Caco-2 (cell line): ENCODE measurements at regions of chr1 and their contacts with region 1.

Region 1: DNA sequence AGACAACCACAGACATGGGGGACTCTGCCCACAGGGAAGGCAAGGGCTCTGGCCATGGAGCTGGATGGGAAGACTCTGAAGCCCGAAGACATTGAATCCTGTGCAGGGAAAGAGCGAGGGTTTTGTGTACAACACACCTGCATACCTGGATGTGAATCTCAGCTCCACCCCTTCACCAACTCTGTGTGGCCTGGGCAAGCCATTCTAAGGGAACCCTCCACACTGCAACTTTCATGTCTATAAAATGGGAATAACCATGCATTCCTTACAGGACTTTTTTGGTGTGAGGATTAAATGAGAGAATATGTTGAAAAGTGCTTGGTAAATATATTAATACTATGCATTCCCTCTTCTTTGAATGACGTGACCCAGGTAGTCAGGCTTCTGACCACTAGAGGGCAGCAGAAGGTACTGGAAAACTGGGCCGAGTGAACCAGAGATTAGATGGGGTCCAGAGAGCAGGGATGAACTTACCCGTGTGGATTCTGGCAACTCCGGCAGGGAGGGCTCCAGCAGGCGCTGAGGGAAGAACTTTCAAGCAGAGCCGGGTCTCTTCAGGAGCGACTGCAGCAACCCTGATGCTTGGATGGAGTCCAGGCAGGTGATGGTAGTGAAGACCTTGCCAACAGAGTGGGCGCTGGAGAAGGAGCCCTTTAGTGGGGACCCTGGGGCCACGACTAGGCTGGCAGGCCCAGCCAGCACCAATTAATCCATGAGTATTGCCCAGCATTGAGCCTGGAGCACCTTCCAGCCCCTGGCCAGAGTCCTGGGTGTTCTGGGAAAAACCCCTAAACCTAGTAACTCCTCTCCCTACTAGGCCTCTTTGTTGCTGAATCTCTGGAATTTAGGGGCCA is 834 bp upstream of the ELF3 start:
- DNase-seq: peak; percentile 89 to 91
- H3K4me3 ChIP-seq: peak overlapping the region; percentile 19
- H3K4me3 Mint-ChIP-seq: peak overlapping the region; percentile 72
- H3K27ac Mint-ChIP-seq: peak overlapping the region; percentile 58
- H3K4me1 ChIP-seq: peaks cover 56% of the 10 kb centered on the region
- H3K4me1 Mint-ChIP-seq: peaks cover 30% of the 10 kb centered on the region
- H3K27me3 ChIP-seq: no peaks in the 10 kb centered on the region
- H3K27me3 Mint-ChIP-seq: no peaks in the 10 kb centered on the region
- CTCF ChIP-seq: peak; percentile 88 to 93

Region 2: GRCh38 chr1:201904579-201904978 is 105.0 kb before region 1 on chr1:
- CTCF ChIA-PET with region 1: no interaction called
- POLR2A ChIA-PET with region 1: no interaction called
- intact Hi-C with region 1: no loop called
- DNase-seq: no peak
- H3K4me3 ChIP-seq: no peak overlapping the region
- H3K4me3 Mint-ChIP-seq: no peak overlapping the region
- H3K27ac Mint-ChIP-seq: no peak overlapping the region
- H3K4me1 ChIP-seq: no peaks in the 10 kb centered on the region
- H3K4me1 Mint-ChIP-seq: no peaks in the 10 kb centered on the region
- H3K27me3 ChIP-seq: no peaks in the 10 kb centered on the region; the same call in 1 of the 2 replicates
- H3K27me3 Mint-ChIP-seq: peaks cover 5% of the 10 kb centered on the region
- CTCF ChIP-seq: no peak

Region 3: GRCh38 chr1:202034683-202035462 is 25.3 kb after region 1 on chr1:
- CTCF ChIA-PET with region 1: interaction called, 46 read pairs
- POLR2A ChIA-PET with region 1: interaction called, 109 read pairs
- intact Hi-C with region 1: loop called (anchors 1 kb)
- DNase-seq: peak; percentile 98 to 99
- H3K4me3 ChIP-seq: peak overlapping the region; percentile 26
- H3K4me3 Mint-ChIP-seq: peak overlapping the region; percentile 70
- H3K27ac Mint-ChIP-seq: peak overlapping the region; percentile 95
- H3K4me1 ChIP-seq: peaks cover 59% of the 10 kb centered on the region
- H3K4me1 Mint-ChIP-seq: peaks cover 48% of the 10 kb centered on the region
- H3K27me3 ChIP-seq: no peaks in the 10 kb centered on the region
- H3K27me3 Mint-ChIP-seq: no peaks in the 10 kb centered on the region
- CTCF ChIP-seq: no peak

Region 4: DNA sequence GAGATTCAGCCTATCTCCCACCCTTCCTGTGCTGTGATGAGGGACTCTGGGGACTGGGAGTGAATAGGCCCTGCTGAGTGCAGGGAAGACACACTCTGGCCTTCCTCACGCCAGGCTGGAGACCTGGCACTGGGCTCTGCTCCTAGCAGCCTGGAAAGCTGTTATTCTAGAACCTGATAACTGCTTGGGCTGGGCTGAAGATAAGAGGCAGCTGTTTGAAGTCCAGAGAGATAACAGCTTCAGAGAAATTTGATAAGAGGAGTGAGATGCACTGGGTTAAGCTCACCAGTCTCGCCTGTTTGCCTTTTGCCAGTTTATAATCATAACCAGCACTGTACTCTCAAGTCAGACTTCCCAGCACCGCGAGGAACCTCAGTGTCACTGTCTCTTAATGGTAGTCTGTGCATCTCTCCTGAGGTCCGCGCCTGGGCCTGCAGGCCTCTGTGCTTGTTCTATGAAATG is 66.5 kb after region 1 on chr1:
- CTCF ChIA-PET with region 1: interaction called, 10 read pairs
- POLR2A ChIA-PET with region 1: interaction called, 42 read pairs
- intact Hi-C with region 1: loop called (anchors 1 kb)
- DNase-seq: peak; percentile 83 to 89
- H3K4me3 ChIP-seq: no peak overlapping the region
- H3K4me3 Mint-ChIP-seq: peak overlapping the region; percentile 25
- H3K27ac Mint-ChIP-seq: peak overlapping the region; percentile 88
- H3K4me1 ChIP-seq: peaks cover 54% of the 10 kb centered on the region
- H3K4me1 Mint-ChIP-seq: peaks cover 46% of the 10 kb centered on the region
- H3K27me3 ChIP-seq: no peaks in the 10 kb centered on the region
- H3K27me3 Mint-ChIP-seq: no peaks in the 10 kb centered on the region
- CTCF ChIP-seq: no peak

Region 5: GRCh38 chr1:202090997-202091396 is 81.4 kb after region 1 on chr1:
- CTCF ChIA-PET with region 1: interaction called, 5 read pairs
- POLR2A ChIA-PET with region 1: interaction called, 9 read pairs
- intact Hi-C with region 1: loop called (anchors 1 kb)
- DNase-seq: peak in 1 of 2 experiments; percentile 52
- H3K4me3 ChIP-seq: no peak overlapping the region
- H3K4me3 Mint-ChIP-seq: no peak overlapping the region
- H3K27ac Mint-ChIP-seq: peak overlapping the region; percentile 14
- H3K4me1 ChIP-seq: peaks cover 30% of the 10 kb centered on the region
- H3K4me1 Mint-ChIP-seq: peaks cover 35% of the 10 kb centered on the region
- H3K27me3 ChIP-seq: no peaks in the 10 kb centered on the region
- H3K27me3 Mint-ChIP-seq: no peaks in the 10 kb centered on the region
- CTCF ChIP-seq: peak; percentile 39 to 41

Region 6: DNA sequence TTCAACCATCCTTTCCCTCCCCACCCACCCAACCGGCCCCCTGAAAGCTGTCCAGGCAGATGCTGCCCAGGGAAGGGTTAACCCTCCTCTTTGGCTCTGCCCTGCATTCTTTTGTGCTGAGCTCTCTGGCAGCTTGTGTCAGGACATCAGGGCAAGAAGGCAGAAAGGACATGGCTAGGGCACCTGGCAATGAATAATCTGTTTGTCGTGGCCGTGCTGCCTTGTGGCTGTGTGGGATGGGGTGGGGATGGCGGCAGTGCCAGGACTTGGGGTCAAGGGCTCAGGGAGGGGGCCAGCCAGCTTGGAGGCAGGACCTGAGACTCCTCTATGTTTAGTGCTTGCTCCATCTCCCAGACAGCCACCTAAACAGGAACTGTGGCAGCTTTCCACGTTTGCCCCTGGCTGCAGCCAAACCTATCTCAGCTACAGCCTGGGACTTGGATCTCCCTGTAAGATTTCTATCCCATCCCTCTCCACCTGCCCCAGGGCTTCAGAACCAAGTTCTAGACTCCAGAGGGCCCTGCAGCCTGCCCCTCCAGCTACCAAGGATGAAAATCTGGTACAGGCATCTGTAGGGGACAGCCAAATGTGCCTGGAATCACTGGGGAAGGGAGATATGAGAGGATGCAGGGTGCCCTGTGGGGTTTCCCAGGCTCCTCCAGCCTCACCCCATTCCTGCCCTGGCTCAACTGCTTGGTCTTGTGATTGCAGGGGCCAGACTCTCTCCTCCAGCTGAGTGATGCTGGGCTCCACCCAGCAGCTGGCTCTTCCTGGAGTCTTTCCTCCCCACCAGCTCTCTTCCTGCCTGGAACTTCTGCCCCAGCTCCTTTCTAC is 103.5 kb after region 1 on chr1:
- CTCF ChIA-PET with region 1: interaction called, 18 read pairs
- POLR2A ChIA-PET with region 1: interaction called, 50 read pairs
- intact Hi-C with region 1: loop called (anchors 1 kb)
- DNase-seq: peak in 1 of 2 experiments; percentile 28
- H3K4me3 ChIP-seq: no peak overlapping the region
- H3K4me3 Mint-ChIP-seq: peak overlapping the region; percentile 16
- H3K27ac Mint-ChIP-seq: peak overlapping the region; percentile 81
- H3K4me1 ChIP-seq: peaks cover 49% of the 10 kb centered on the region
- H3K4me1 Mint-ChIP-seq: peaks cover 26% of the 10 kb centered on the region
- H3K27me3 ChIP-seq: no peaks in the 10 kb centered on the region
- H3K27me3 Mint-ChIP-seq: no peaks in the 10 kb centered on the region
- CTCF ChIP-seq: no peak

Region 7: DNA sequence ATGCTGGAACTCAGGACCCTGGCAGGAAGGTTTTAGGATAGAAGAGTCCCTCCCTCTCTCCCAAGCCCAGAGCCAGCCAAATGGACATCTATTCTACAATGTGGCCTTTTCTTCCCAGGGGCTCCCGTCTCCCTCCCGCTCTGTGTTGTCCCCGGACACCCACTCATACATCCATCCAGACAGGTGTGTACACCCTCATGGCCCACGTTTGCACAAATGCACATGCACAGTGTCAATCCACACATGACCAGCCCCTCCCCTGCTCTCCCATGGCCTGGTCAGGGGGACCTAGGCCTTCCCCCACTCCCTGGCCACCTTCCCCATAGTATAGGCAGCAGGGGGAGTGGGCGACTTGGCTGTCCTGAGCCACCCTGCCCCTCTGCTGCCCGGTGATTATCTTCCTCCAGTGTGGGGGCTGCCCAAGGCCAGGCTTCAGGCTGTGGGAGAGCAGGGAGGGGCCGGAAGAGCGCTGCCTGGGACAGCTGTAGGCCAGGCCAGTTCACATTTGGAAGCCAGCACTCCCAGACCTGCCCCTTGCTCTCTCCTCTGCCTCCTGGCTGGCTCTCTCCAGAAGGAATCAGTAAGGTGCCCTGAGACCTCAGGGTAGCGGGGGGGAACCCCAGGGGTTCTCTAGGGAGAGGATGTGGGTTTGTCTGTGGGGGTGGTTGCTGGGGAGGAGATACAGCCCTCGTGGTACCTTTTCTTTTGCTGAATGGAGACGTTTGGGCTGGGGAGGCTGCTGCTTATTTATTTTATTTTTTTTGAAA is 154.9 kb after region 1 on chr1:
- CTCF ChIA-PET with region 1: no interaction called
- POLR2A ChIA-PET with region 1: no interaction called
- intact Hi-C with region 1: no loop called
- DNase-seq: no peak
- H3K4me3 ChIP-seq: no peak overlapping the region
- H3K4me3 Mint-ChIP-seq: no peak overlapping the region
- H3K27ac Mint-ChIP-seq: no peak overlapping the region
- H3K4me1 ChIP-seq: peaks cover 7% of the 10 kb centered on the region; the same call in 1 of the 2 replicates
- H3K4me1 Mint-ChIP-seq: no peaks in the 10 kb centered on the region
- H3K27me3 ChIP-seq: no peaks in the 10 kb centered on the region
- H3K27me3 Mint-ChIP-seq: no peaks in the 10 kb centered on the region
- CTCF ChIP-seq: no peak